Kidney (tissue), 22 donors: ENCODE measurements at regions of chr7 and their contacts with region 1.

Region 1: GRCh38 chr7:117101026-117101425 is 147.7 kb downstream of the ST7 start:
- DNase-seq: peak in 3 of 5 donors; percentile 20 to 76 (median 65)
- H3K4me3 ChIP-seq: no peak overlapping the region
- H3K27ac ChIP-seq: no peak overlapping the region
- H3K4me1 ChIP-seq: peaks cover 0 to 11% (median 3%) of the 10 kb centered on the region in 3 donors
- H3K27me3 ChIP-seq: no peaks in the 10 kb centered on the region
- CTCF ChIP-seq: no peak

Region 2: GRCh38 chr7:116899308-116899707 is 201.7 kb before region 1 on chr7:
- intact Hi-C with region 1: no loop called
- DNase-seq: no peak
- H3K4me3 ChIP-seq: no peak overlapping the region
- H3K27ac ChIP-seq: no peak overlapping the region
- H3K4me1 ChIP-seq: no peaks in the 10 kb centered on the region
- H3K27me3 ChIP-seq: no peaks in the 10 kb centered on the region
- CTCF ChIP-seq: no peak

Region 3: DNA sequence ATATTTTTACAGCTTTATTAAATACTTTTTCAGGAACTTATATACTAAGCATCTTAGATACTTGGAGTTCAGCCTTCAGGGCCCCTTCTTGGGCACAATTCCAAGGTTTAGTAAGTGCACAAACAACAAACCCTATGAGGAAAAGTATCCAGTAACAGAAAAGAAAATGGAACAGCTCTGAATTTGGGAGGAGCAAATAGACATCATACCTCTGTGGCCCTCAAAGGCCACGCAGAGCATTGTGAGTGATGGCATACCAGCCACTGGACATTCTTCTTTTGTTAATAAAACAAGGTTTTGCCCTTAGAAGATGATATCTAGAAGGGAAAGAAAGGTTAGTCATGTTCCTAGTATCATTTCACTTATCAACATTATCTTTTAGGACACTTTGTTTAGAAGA is 101.7 kb before region 1 on chr7:
- intact Hi-C with region 1: loop called (anchors 10 kb)
- DNase-seq: no peak
- H3K4me3 ChIP-seq: no peak overlapping the region
- H3K27ac ChIP-seq: no peak overlapping the region
- H3K4me1 ChIP-seq: no peaks in the 10 kb centered on the region
- H3K27me3 ChIP-seq: no peaks in the 10 kb centered on the region
- CTCF ChIP-seq: no peak